Activated CD4-positive, alpha-beta memory T cell treated with anti-CD3 and anti-CD28 coated beads for 36 hours (primary cell): ENCODE measurements at regions of chr7 and their contacts with region 1.

Region 1: DNA sequence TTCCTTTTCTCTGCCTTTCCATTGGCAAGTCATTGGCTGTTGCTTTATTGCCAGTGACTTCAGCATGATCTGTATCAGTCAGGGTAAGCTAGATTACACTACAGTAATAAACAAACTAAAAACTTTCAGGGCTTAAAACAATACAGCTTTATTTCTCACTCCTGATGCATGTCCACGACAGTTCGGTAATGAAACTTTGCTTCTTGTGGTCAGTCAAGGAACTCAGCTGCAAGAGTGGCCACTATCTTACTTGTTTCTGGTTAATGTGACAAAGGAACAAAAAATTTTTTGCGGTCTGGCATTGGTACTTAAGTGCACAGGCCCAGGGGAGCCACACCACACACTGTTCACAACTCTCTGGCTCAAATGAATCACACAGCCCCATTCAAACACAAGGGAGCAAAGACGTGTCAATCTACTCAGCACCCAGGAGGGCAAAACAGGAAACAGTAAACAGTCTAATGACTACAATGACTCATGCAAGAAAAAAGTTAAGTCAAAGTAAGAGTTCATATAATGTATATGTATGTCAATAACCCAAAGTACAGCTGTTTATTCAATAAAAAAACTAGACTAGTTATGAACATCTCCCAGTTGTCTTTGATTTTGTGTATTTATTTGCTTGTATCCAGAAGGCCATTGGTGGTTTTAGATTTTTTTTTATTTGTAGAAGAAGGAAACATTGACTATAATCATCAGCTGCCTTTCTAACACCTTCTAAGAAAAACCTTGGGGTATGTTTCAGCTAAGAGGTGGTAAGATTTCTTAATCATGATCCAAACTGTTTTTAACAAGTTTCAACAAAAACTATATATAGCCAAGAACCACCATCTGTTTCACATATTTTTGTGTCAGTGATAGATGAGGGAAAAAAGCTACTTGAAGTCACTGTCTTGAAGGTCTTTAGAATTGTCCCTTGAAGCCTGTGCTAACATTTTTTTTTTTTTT is 134.4 kb upstream of the FAM3C start:
- DNase-seq: peak; percentile 74
- H3K4me3 Mint-ChIP-seq: peak overlapping the region; percentile 21
- H3K27ac Mint-ChIP-seq: peak overlapping the region; percentile 87
- H3K4me1 Mint-ChIP-seq: peaks cover 21% of the 10 kb centered on the region
- H3K27me3 Mint-ChIP-seq: no peaks in the 10 kb centered on the region

Region 2: DNA sequence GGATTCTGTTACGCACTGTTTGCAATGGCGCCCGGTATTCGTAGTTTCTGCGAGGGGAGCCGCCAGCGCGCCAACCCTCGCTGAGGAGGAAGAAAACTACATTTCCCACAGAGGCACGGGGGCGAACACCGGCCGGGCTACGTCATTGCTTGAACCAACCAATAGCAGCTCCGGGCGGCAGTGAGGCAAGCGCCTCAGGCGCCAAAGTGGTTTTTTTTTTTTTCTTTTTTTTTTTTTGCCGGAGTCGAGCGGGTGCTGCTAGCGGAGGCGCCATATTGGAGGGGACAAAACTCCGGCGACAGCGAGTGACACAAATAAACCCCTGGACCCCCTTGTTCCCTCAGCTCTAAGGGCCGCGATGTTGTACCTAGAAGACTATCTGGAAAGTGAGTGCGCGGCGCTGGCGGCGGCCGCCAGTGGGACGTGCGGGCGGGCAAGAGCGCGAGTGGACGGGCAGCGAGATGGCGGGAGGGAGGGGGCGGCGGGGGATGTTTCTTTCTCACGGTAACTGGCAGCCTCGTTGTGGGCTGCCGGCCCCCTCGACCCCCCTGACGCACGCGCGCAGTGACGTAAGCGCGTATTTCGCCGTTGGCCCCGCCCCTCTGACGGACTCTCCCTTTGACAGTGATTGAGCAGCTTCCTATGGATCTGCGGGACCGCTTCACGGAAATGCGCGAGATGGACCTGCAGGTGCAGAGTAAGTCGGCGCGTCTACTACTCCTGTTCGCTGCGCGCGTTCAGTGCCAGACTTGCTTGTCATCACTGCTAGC is 579.8 kb before region 1 on chr7 and contains the start of gene ING3:
- CTCF ChIA-PET with region 1: no interaction called
- POLR2A ChIA-PET with region 1: no interaction called
- intact Hi-C with region 1: loop called (anchors 1 kb)
- DNase-seq: peak; percentile 98
- H3K4me3 Mint-ChIP-seq: peak within 1 kb of the TSS; percentile 94
- H3K27ac Mint-ChIP-seq: peak within 1 kb of the TSS; percentile 98
- H3K4me1 Mint-ChIP-seq: peaks cover 22% of the 10 kb centered on the region
- H3K27me3 Mint-ChIP-seq: peaks cover 9% of the 10 kb centered on the region
- total RNA-seq, gene ING3: 23.5 to 24.8 TPM

Region 3: DNA sequence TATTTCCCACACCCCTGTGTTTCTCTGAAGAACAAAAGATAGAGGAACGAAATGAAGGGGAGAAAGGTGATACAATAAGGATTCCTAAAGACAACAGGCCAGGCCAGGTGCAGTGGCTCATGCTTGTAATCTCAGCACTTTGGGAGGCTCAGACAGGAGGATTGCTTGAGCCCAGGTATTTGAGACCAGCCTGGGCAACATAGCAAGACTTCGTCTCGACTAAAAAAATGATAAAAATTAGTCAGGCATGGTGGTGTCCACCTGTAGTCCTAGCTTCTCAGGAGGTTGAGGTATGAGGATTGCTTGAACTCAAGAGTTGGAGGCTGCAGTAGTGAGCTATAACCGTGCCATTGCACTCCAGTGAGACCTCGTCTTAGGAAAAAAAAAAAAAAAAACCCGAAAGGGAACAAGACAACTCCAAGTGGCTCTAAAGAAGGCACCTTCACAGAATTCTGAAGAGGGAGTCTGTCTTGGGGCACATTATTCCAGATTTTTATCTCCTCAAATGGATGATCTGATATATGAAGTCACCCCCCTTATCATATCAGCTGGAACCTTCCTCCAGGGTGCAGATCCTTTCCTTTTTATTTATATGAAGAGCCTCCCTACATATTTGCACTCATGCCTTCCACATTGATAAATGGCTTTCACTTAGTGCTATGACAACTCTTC is 92.9 kb before region 1 on chr7:
- CTCF ChIA-PET with region 1: interaction called, 7 read pairs
- POLR2A ChIA-PET with region 1: interaction called, 3 read pairs
- intact Hi-C with region 1: loop called (anchors 1 kb)
- DNase-seq: no peak
- H3K4me3 Mint-ChIP-seq: no peak overlapping the region
- H3K27ac Mint-ChIP-seq: peak overlapping the region; percentile 74
- H3K4me1 Mint-ChIP-seq: peaks cover 30% of the 10 kb centered on the region
- H3K27me3 Mint-ChIP-seq: no peaks in the 10 kb centered on the region

Region 4: DNA sequence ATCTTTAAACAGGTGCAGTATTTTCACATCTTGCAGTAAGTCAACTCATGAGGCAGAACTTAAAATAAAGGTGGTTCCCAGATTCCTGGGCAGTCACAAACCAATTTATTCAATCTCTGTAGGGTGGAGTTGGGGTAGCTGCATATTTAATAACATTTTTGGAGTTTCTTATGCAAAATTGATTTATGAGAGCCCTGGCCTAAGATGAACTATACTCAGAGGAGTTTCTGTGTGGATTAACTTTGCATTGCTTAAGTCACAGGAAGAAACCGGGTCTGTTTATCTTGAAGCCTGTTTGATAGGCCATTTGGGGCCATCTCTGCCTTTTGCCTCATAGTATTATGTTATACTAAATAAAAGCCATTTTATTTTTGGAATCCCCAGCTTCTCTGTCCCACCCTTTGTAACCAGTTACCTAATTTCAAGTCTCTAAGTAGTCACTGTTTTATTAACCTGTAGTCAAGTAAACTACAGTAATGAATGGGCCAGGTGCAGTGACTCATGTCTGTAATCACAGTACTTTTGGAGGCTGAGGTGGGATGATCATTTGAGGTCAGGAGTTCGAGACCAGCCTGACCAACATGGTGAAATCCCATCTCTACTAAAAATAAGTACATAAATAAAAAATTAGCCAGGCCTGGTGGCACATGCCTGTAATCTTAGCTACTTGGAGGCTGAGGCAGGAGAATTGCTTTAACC is 30.0 kb before region 1 on chr7:
- CTCF ChIA-PET with region 1: interaction called, 3 read pairs
- POLR2A ChIA-PET with region 1: interaction called, 6 read pairs
- intact Hi-C with region 1: loop called (anchors 1 kb)
- DNase-seq: peak; percentile 33
- H3K4me3 Mint-ChIP-seq: no peak overlapping the region
- H3K27ac Mint-ChIP-seq: peak overlapping the region; percentile 32
- H3K4me1 Mint-ChIP-seq: peaks cover 17% of the 10 kb centered on the region
- H3K27me3 Mint-ChIP-seq: no peaks in the 10 kb centered on the region